Heart left ventricle (tissue), 16 donors: ENCODE measurements at regions of chr3 and their contacts with region 1.

Region 1: GRCh38 chr3:4271834-4272233 is 31.3 kb upstream of the SETMAR start:
- DNase-seq: no peak
- ATAC-seq: no peak
- H3K4me3 ChIP-seq: no peak overlapping the region
- H3K27ac ChIP-seq: no peak overlapping the region
- H3K4me1 ChIP-seq: peaks cover 0 to 16% (median 0%) of the 10 kb centered on the region in 12 donors
- H3K27me3 ChIP-seq: no peaks in the 10 kb centered on the region
- CTCF ChIP-seq: peak in 11 of 12 donors; percentile 13 to 58 (median 39)
- POLR2A ChIP-seq: no peak

Region 2: GRCh38 chr3:3842356-3842755 is 429.5 kb before region 1 on chr3:
- intact Hi-C with region 1: no loop called
- DNase-seq: no peak
- ATAC-seq: no peak
- H3K4me3 ChIP-seq: no peak overlapping the region
- H3K27ac ChIP-seq: no peak overlapping the region
- H3K4me1 ChIP-seq: no peaks in the 10 kb centered on the region
- H3K27me3 ChIP-seq: no peaks in the 10 kb centered on the region
- CTCF ChIP-seq: no peak
- POLR2A ChIP-seq: no peak

Region 3: GRCh38 chr3:4006288-4006687 is 265.5 kb before region 1 on chr3:
- intact Hi-C with region 1: loop called in 1 of 10 experiments (anchors 10 kb)
- DNase-seq: no peak
- ATAC-seq: no peak
- H3K4me3 ChIP-seq: no peak overlapping the region
- H3K27ac ChIP-seq: no peak overlapping the region
- H3K4me1 ChIP-seq: no peaks in the 10 kb centered on the region
- H3K27me3 ChIP-seq: no peaks in the 10 kb centered on the region
- CTCF ChIP-seq: no peak
- POLR2A ChIP-seq: no peak